Natural killer cell (primary cell): ENCODE measurements at regions of chr3 and their contacts with region 1.

Region 1: DNA sequence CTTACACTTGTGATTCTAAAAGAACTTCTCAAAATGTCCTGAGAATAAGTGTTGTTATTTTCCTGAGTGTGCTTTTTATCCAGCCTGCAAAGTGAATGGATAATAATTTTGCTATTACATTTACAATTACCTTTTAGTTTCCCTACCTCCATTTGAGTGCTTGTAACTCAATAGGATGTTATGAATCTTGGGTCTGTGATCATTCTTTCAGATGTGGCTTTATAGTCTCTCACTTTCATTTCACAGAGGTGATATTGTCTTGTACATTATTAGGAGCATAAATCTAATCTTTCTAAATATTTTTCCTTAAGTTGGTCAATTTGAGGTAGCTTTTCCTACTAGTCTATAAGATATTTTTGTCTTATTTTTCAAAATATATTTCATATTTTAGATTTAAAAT is 386.3 kb upstream of the EPHA6 start:
- DNase-seq: no peak
- ATAC-seq: no peak
- H3K4me3 ChIP-seq: no peak overlapping the region
- H3K4me3 Mint-ChIP-seq: no peak overlapping the region
- H3K27ac ChIP-seq: no peak overlapping the region
- H3K27ac Mint-ChIP-seq: no peak overlapping the region
- H3K4me1 ChIP-seq: no peaks in the 10 kb centered on the region
- H3K4me1 Mint-ChIP-seq: no peaks in the 10 kb centered on the region
- H3K27me3 ChIP-seq: no peaks in the 10 kb centered on the region
- H3K27me3 Mint-ChIP-seq: no peaks in the 10 kb centered on the region
- CTCF ChIP-seq: no peak

Region 2: GRCh38 chr3:96478496-96478895 is 50.4 kb after region 1 on chr3:
- intact Hi-C with region 1: loop called (anchors 10 kb)
- DNase-seq: no peak
- ATAC-seq: no peak
- H3K4me3 ChIP-seq: no peak overlapping the region
- H3K4me3 Mint-ChIP-seq: no peak overlapping the region
- H3K27ac ChIP-seq: no peak overlapping the region
- H3K27ac Mint-ChIP-seq: no peak overlapping the region
- H3K4me1 ChIP-seq: no peaks in the 10 kb centered on the region
- H3K4me1 Mint-ChIP-seq: no peaks in the 10 kb centered on the region
- H3K27me3 ChIP-seq: no peaks in the 10 kb centered on the region
- H3K27me3 Mint-ChIP-seq: no peaks in the 10 kb centered on the region
- CTCF ChIP-seq: no peak